ENCODE measurements at regions of chr1 and their contacts with region 1.

Region 1: DNA sequence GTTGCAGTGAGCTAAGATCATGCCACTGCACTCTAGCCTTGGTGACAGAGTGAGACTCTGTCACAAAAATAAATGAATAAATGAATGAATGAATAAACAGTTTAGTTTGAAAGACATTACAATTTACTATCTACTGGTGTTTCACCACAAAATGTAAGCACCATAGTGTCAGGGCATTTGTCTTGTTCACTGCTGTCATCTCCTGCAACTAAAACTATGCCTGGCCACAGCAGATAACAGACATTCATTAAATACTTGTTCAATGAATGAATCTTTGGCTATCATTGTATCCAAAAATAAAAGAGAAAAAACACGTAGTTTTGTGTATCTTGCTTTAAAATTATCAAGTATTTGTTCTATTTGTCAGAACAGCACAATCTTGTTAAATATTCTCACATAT is 32.5 kb downstream of the SASS6 start:
- DNase-seq: no peak
- H3K4me3 Mint-ChIP-seq: no peak overlapping the region
- H3K27ac Mint-ChIP-seq: no peak overlapping the region
- H3K4me1 Mint-ChIP-seq: no peaks in the 10 kb centered on the region
- H3K27me3 Mint-ChIP-seq: no peaks in the 10 kb centered on the region

Region 2: DNA sequence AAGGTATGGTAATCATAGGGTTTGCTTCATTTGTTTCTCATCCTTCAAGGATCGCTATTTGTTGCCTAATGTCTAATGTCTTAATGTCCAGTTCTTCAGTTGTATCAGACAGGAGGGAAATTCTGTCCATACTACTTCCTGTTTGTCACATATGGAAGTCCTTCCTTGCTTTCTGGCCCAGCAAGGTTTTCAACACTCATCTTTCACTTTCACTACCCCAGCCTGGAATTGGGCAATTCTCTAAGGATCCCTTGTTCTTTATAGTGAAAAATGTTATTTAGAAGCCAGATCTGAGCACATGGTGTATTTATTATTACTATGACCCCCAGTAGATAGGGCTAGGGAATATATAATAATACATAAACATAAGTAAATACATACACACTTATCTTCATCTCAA is 181.0 kb before region 1 on chr1:
- CTCF ChIA-PET with region 1: no interaction called
- intact Hi-C with region 1: loop called (anchors 5 kb)
- DNase-seq: no peak
- H3K4me3 Mint-ChIP-seq: no peak overlapping the region
- H3K27ac Mint-ChIP-seq: no peak overlapping the region
- H3K4me1 Mint-ChIP-seq: no peaks in the 10 kb centered on the region
- H3K27me3 Mint-ChIP-seq: no peaks in the 10 kb centered on the region

Region 3: GRCh38 chr1:100292711-100293110 is 192.5 kb after region 1 on chr1:
- CTCF ChIA-PET with region 1: no interaction called
- intact Hi-C with region 1: no loop called
- DNase-seq: no peak
- H3K4me3 Mint-ChIP-seq: no peak overlapping the region
- H3K27ac Mint-ChIP-seq: no peak overlapping the region
- H3K4me1 Mint-ChIP-seq: peaks cover 3% of the 10 kb centered on the region
- H3K27me3 Mint-ChIP-seq: no peaks in the 10 kb centered on the region

Measured in activated naive CD4-positive, alpha-beta T cell treated with anti-CD3 and anti-CD28 coated beads for 36 hours (primary cell).